ENCODE measurements at regions of chr14 and their contacts with region 1.

Region 1: DNA sequence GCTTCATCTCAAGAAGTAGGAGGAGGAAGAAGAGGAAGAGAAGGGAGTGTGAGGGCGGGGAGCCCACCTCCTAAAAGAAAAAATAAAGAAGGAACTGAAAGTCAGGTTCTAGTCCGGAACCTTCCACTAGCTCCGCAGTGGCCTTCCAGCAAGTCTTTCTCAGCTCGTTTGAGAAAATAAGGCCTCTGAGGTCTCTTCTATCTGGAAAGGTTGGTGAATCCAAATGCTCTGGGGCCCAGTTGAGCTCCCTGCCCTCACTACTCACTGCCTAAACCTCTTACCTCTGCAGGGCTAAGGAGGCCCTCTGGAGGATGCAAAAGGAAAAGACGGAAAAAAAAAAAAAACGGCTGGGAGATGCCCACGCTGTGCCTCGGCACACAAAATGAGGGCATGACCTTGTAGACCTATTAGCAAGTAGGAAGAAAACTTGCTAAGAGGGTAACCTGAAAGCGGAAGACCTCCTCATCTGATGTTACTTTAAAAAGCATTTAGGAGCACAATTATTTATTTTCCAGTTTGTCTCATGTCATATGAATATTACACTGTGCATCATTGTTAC is 35.9 kb downstream of the FBLN5 start:
- DNase-seq: peak; percentile 62
- ATAC-seq: peak; percentile 76
- H3K4me3 Mint-ChIP-seq: no peak overlapping the region
- H3K27ac Mint-ChIP-seq: peak overlapping the region; percentile 27
- H3K4me1 Mint-ChIP-seq: peaks cover 22% of the 10 kb centered on the region
- H3K27me3 Mint-ChIP-seq: peaks cover 3% of the 10 kb centered on the region

Region 2: GRCh38 chr14:91649930-91650329 is 261.6 kb before region 1 on chr14:
- CTCF ChIA-PET with region 1: interaction called, 35 read pairs
- POLR2A ChIA-PET with region 1: no interaction called
- DNase-seq: peak; percentile 55
- ATAC-seq: no peak
- H3K4me3 Mint-ChIP-seq: no peak overlapping the region
- H3K27ac Mint-ChIP-seq: no peak overlapping the region
- H3K4me1 Mint-ChIP-seq: peaks cover 13% of the 10 kb centered on the region
- H3K27me3 Mint-ChIP-seq: peaks cover 2% of the 10 kb centered on the region

Region 3: GRCh38 chr14:91836119-91836881 is 75.3 kb before region 1 on chr14:
- CTCF ChIA-PET with region 1: interaction called, 12 read pairs
- POLR2A ChIA-PET with region 1: no interaction called
- DNase-seq: peak; percentile 86
- ATAC-seq: peak; percentile 92
- H3K4me3 Mint-ChIP-seq: peak overlapping the region; percentile 88
- H3K27ac Mint-ChIP-seq: peak overlapping the region; percentile 69
- H3K4me1 Mint-ChIP-seq: peaks cover 58% of the 10 kb centered on the region
- H3K27me3 Mint-ChIP-seq: peaks cover 18% of the 10 kb centered on the region

Region 4: GRCh38 chr14:91872517-91873470 is 38.8 kb before region 1 on chr14:
- CTCF ChIA-PET with region 1: interaction called, 24 read pairs
- POLR2A ChIA-PET with region 1: no interaction called
- DNase-seq: peak; percentile 46
- ATAC-seq: peak; percentile 1
- H3K4me3 Mint-ChIP-seq: peak overlapping the region; percentile 69
- H3K27ac Mint-ChIP-seq: peak overlapping the region; percentile 95
- H3K4me1 Mint-ChIP-seq: peaks cover 99% of the 10 kb centered on the region
- H3K27me3 Mint-ChIP-seq: no peaks in the 10 kb centered on the region

Region 5: DNA sequence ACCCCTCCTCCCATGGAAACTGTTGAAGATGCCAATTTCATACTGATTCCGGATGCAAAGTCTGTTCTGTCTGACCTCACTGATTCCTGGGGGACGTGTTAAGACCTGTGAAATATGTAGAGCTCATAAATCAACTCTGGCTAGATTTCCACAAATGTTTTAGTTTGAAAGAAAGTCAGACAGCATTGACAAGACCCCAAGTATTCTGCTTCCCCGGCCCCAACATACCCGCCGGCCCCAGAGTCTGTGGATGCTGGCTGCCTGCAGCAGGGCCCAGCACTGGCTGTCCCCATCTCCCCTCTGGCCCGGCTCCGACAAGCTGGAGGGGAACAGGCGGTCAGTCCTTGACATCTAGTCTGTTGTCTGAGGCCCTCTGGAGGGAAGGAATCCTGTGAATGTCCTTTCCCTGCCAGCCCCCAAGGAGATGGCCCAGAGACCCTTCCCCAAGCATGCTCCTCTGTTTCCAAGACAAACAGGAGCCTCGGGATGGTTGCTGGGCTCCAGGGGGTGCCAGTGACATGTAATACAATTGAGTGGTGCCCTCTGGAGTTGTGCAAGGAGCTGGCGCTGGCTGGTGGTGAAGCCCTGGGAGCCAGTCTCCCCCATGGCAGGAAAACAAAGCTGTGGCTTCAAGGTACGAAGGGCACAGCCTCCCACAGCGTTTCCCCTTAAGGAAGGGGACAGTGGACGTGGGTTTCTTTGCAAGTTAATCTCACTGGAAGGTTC is 13.6 kb after region 1 on chr14:
- CTCF ChIA-PET with region 1: interaction called, 10 read pairs
- POLR2A ChIA-PET with region 1: no interaction called
- DNase-seq: no peak
- ATAC-seq: no peak
- H3K4me3 Mint-ChIP-seq: no peak overlapping the region
- H3K27ac Mint-ChIP-seq: no peak overlapping the region
- H3K4me1 Mint-ChIP-seq: no peaks in the 10 kb centered on the region
- H3K27me3 Mint-ChIP-seq: no peaks in the 10 kb centered on the region